ENCODE measurements at regions of chr1 and their contacts with region 1.

Region 1: DNA sequence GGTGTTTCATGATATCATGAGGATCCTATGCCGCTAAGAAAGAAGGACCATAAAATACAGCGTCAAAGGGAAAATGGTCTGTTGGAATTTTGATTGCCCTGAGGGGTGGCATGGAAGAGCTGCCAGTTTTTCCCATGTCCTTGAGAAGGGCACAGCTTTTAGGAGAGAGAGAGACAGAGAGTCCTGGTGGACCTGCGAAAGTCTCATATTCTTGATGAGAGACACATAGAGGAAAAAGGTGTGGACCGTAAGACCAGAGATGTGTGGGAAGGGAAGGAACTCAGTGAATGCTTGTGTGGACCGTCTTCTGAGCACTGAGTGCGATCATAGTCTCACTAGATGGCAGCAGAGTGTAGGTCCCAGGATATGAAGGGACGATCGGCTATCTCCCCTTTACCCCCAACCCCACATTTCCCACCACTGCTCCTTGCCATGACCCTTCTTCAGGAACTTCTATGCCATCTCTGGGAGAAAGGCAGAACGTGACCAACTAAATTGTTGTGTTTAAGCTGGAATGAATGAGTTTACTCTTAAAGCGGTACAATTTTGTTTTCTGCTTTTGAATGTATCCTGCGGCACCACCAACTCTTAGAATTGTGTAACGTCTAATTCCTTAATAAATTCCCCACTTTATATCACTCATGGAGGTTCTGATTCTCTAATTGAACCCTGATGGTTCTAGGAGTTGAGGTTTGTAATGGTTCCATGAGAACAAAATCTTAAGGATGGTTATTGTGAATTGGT is 117.7 kb downstream of the CTH start:
- DNase-seq: peak; percentile 61

Region 2: DNA sequence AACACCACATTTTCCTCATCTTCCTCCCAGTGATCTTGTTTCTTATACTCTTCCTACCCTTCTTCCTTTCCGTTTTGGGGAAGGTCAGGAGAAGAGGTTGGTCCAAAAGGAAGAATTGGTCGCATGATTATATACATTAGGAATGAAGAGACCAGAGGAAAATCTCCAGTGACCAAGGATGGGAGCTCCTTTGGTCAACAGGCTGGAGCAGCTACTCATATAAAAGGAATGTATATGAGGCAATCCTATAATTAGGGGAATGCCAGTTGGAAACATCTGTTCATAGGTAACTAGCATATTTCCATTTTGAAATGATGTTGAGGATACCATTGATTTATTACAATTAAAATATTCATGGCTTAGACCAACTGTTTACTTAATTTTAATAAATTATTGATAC is 437.9 kb before region 1 on chr1:
- in situ Hi-C with region 1: no loop called
- DNase-seq: no peak

Region 3: DNA sequence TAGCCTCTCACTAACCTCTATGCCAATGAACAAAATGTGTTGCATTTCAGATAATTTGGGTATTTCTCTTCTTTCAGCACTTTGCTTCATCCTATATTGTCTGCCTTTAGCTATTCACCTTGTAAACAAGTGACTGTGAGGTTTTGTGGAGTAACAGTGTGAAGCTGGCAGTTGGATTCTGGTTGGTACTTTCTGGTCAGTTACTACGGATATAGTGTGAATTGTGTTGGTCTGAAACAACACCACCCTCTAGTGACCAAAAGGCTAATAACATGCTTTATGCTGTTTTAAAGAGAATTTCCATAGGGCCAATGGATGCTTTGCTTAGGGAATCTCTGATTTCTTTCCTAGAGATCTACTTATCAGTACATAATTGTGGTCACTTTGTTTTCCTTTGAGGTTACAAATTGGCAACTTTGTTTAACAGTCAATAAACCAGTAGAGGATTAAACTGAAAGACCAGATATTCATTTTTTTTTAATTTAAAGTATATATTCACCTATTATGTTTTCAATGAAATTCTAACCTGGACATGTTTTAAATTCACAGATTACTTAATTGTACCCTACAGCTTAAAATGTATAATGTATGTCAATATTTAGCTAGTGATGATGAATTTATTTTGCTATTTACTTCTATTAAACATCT is 521.3 kb after region 1 on chr1:
- in situ Hi-C with region 1: loop called (anchors 25 kb)
- DNase-seq: peak; percentile 90